Activated T-helper 2 cell treated with anti-CD3 and anti-CD28 coated beads, Interferon-gamma antibody, Interleukin-2, Interleukin-4, amounts not matched to agents 10 μg/mL and 5 μg/mL and 100 μg/mL, durations not matched to agents 14 hours and 24 hours and 36 hours (primary cell): ENCODE measurements at regions of chr3 and their contacts with region 1.

Region 1: DNA sequence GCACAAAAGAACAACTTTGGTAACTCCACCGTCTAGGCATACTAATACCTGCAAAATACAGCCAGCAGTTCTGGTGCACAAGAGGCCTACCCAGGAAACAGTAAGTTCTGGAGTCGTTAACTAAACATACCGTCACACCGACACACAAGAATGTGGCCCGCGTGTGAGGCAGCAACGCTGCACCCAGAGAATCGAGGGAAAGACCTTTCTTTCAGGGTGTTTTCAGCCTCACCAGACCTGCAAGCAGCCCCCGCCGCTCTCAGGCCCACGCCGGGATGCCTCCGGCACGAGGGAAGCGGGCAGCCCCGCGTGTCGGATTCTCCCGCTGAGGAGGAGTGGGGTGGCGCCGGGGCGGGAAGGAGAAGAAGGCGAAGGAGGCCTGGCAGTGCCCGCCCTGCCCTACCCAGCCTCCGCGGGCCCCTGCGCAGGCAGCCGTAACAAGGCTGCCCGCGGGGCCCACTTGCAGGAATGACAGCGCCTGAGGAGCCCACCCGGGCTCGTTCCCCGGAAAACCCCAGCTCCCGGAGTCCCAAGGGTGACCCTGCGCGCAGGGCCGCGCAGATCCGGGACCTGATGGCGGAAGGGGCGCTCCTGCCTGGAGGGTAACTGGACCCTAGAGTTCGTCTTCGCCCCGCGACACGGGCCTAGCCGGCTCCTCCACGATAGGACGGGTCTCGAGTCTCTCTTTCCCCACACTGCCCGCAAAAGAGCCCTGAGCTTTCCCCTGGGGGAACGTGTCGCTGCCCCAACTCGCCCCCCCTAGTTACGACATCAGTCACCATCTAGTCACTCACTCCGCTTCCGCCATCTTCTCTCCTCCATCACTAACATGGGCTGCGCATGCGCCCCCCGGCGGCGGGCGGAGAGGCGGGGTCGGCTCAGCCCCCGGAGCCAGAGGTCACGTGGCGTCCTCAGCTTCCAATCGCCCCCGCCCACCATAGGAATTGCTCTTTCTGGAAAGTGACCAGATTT is at the start of gene PHC3:
- DNase-seq: peak; percentile 90
- H3K4me3 Mint-ChIP-seq: peak within 1 kb of the TSS; percentile 94
- H3K27ac Mint-ChIP-seq: peak within 1 kb of the TSS; percentile 99
- H3K4me1 Mint-ChIP-seq: peaks cover 22% of the 10 kb centered on the region
- H3K27me3 Mint-ChIP-seq: no peaks in the 10 kb centered on the region
- total RNA-seq, gene PHC3: 48.3 and 52.0 TPM in 2 replicates

Region 2: GRCh38 chr3:169812332-169813235 is 368.6 kb before region 1 on chr3 and contains the starts of genes LRRC34 and LRRIQ4:
- intact Hi-C with region 1: loop called (anchors 2 kb)
- DNase-seq: peak; percentile 66
- H3K4me3 Mint-ChIP-seq: peak within 1 kb of the TSS; percentile 87
- H3K27ac Mint-ChIP-seq: peak within 1 kb of the TSS; percentile 95
- H3K4me1 Mint-ChIP-seq: peaks cover 37% of the 10 kb centered on the region
- H3K27me3 Mint-ChIP-seq: peaks cover 15% of the 10 kb centered on the region
- total RNA-seq, gene LRRC34: 5.6 and 5.9 TPM in 2 replicates
- total RNA-seq, gene LRRIQ4: 0.16 TPM in 2 replicates

Region 3: DNA sequence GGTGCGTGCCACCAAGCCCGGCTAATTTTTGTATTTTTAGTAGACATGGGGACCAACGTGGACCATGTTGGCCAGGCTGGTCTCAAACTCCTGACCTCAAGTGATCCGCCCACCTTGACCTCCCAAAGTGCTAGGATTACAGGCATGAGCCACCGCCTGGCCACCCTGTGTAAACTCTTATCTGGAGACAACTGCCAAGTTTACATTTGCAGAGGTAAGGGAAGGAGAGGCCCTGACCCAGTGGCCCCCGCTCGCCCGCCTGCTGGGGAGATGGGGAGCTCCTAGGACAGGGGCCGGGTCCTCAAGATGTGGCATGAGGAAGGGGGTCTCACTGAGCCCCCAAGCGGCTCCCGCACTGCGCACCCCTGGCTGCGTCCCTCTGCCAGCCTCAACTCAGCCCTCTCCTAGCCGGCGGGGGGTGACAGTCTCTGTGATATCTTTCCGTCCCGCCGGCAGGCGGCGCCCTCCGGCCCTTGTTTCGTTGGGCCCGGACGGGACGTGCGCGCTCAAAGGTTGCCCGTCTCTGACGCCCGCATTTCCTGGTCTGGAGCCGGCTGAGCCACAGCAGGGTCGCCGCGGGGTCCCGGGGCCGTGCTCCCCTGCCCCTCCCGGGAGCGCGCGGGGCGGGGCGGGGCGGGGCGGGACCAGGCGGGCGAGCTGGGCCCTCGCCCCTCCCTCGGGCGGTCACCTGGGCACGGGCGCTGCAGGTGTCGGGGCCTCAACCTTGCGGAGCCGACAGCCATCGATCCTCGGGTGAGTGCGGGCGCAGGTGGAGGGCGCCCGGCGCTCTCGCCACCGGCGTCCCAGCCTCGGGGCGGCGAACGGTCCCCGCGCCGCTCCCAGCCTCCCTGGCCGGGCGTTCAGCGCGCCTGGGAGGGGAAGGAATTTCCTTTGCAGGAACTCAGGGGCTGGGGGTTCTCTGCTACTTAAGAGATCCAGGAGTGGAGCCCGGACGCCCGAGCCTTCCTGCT is 143.4 kb before region 1 on chr3 and contains the start of gene GPR160:
- intact Hi-C with region 1: loop called (anchors 5 kb)
- DNase-seq: peak; percentile 75
- H3K4me3 Mint-ChIP-seq: peak within 1 kb of the TSS; percentile 84
- H3K27ac Mint-ChIP-seq: peak within 1 kb of the TSS; percentile 33
- H3K4me1 Mint-ChIP-seq: peaks cover 22% of the 10 kb centered on the region
- H3K27me3 Mint-ChIP-seq: no peaks in the 10 kb centered on the region
- total RNA-seq, gene GPR160: 7.7 and 9.6 TPM in 2 replicates

Region 4: GRCh38 chr3:170221924-170222646 is 40.9 kb after region 1 on chr3 and contains the start of gene PRKCI:
- intact Hi-C with region 1: loop called (anchors 2 kb)
- DNase-seq: peak; percentile 84
- H3K4me3 Mint-ChIP-seq: peak within 1 kb of the TSS; percentile 87
- H3K27ac Mint-ChIP-seq: peak within 1 kb of the TSS; percentile 89
- H3K4me1 Mint-ChIP-seq: peaks cover 22% of the 10 kb centered on the region
- H3K27me3 Mint-ChIP-seq: peaks cover 4% of the 10 kb centered on the region
- total RNA-seq, gene PRKCI: 24.7 and 32.4 TPM in 2 replicates

Region 5: DNA sequence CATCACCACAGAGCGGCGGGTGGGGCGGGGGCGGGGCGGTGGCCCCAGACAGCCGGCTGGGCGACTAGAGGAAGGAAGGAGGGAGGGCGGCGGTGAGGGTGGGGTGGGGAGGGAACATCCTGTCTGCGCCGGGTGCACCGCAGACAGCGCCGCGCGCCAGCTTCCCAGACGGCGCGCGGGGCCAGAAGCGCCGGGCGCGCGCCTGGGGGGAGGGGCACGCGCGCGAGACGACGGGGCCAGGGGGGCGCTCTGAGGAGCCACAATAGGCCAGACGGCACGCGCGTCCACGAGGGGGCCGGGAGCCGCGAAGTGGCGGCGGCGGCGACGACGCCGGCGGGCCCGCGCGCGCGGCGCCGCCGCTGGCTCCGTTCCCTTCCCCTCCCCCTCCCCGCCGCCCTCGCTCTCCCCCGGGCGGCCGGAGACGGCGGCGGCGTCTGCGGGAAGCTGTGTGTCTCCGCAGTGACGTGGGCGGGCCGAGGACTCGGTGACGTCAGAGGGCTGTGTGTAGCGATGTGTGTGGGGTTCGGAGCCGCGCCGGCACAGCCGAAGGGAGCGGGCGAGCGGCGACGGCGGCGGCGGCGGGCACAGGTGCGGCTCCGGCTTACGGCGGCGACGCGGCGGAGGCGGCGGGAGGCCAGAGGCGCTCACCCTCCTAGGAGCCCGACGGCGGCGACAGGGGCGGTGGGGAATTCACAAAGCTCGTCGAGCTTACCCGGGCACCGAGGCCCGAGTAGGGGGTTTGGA is 176.2 kb after region 1 on chr3 and contains the start of gene SKIL:
- intact Hi-C with region 1: loop called (anchors 1 kb)
- DNase-seq: peak; percentile 93
- H3K4me3 Mint-ChIP-seq: peak within 1 kb of the TSS; percentile 95
- H3K27ac Mint-ChIP-seq: peak within 1 kb of the TSS; percentile 97
- H3K4me1 Mint-ChIP-seq: peaks cover 30% of the 10 kb centered on the region
- H3K27me3 Mint-ChIP-seq: peaks cover 8% of the 10 kb centered on the region
- total RNA-seq, gene SKIL: 31.2 and 33.2 TPM in 2 replicates